Activated CD8-positive, alpha-beta T cell treated with anti-CD3 and anti-CD28 coated beads for 36 hours (primary cell): ENCODE measurements at regions of chr3 and their contacts with region 1.

Region 1: DNA sequence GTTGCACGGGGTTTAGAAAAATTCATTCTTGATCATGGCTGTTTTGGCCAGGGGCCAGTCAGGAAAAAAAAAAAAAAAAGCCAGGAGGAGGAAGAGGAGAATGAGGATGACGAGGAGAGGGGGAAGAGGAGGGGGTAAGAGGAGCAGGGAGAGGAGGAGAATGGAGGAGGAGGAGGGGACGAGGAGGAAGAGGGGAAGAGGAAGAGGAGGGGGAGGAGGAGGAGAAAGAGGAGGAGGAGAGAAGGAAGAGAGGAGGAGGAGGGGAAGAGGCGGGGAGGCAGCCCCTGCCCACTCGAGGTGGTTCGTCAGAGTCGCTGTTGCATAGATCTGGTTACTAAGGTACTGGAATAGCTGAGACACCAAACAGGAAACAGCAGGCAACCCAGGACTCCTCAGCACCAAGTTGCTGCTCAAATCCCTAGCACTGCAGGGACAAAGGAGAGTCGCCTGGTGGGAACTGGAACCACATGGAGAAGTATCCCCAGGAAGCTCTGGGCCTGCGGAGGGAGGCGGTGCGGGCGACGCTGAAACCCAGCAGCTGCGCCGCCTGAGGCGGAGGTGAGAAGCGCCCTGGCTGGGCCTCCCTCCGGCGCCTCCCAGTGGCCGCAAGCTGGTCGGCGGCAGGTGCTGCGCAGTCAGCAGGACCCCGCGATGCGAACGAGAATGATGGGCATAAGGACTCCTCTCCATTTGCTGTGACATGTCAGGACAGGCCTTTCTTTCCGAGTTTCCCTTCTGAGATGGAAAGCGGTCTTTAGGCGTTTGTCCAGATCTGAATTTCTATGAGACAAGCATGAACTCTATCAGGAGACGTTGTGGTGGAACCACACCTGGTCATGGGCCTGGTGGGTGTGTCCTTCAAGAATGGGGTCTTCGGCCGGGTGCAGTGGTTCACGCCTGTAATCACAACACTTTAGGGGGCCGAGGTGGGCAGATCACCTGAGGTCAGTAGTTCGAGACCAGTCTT is 17.5 kb downstream of the FAM240A start:
- DNase-seq: peak; percentile 85
- ATAC-seq: peak; percentile 100
- H3K4me3 Mint-ChIP-seq: peak overlapping the region; percentile 48
- H3K27ac Mint-ChIP-seq: no peak overlapping the region
- H3K4me1 Mint-ChIP-seq: peaks cover 13% of the 10 kb centered on the region
- H3K27me3 Mint-ChIP-seq: no peaks in the 10 kb centered on the region
- CTCF ChIP-seq: peak; percentile 99

Region 2: DNA sequence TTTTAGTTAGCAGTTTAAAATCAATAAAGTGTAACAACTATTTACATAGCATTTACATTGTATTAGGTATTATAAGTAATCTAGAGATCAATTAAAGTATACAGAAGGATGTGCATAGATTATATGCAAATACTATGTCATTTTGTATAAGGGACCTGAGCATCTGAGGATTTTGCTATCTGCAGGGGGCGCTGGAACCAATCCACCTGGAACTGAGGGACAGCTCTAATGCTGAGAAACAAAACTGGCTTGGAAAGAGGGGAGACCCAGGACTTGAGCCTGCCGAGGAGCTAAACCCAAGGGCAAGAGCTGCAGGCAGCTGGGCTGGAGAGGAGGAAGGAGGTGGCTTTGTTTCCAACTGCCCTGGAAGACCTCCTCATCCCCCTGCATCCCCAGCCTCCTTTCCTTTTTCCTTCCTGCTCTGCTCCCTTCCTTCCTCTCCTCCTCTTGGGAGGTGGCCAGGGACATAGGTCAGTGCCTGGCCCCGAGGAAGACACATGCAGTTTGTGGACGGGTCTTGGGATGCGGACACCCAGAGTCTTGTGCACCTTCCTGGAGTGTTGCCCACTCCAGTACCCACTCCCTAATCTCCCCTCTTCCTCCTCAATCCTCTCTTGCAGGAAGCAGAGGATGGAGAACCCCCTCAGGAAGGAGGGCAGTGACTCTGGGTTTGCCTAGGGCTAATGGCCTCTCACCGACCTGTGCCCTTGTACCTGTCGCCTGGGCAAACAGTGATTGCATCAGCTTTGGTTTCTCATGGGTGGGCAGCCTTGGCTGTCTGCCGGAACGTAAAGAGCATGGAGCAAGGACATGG is 132.9 kb before region 1 on chr3:
- CTCF ChIA-PET with region 1: interaction called, 254 read pairs
- POLR2A ChIA-PET with region 1: no interaction called
- intact Hi-C with region 1: no loop called
- DNase-seq: peak; percentile 76
- ATAC-seq: peak; percentile 37
- H3K4me3 Mint-ChIP-seq: no peak overlapping the region
- H3K27ac Mint-ChIP-seq: no peak overlapping the region
- H3K4me1 Mint-ChIP-seq: peaks cover 6% of the 10 kb centered on the region
- H3K27me3 Mint-ChIP-seq: no peaks in the 10 kb centered on the region
- CTCF ChIP-seq: peak; percentile 36

Region 3: DNA sequence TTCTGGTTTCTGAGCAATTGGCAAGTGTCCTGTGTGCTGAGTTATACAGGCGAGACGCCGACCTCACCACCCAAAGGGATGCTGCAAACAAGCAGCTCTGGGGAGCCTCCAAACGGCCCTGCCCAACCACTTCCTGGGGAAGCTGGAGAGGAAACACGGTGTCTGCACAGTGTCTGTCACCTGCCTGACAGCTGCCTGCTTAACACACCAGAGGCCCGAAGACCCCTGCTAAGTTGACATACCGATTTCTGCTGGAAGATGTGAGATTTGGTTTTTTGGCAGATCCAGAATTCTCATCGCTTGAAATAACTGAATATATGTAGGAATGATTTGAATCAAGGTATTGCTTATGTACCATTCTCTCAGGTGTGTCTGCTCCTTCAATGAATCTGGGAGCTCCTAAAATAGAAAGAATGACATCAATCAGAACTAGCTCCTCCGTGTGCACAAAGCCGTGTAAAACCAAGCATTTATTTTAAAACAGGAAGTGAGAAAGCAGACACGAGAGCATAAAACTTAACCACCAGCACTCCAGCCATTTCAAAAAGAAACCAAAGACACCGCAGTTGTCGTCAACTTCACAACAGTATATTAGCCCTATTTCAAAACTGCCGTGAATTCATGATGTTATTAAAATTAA is 90.9 kb before region 1 on chr3:
- CTCF ChIA-PET with region 1: interaction called, 10 read pairs
- POLR2A ChIA-PET with region 1: no interaction called
- intact Hi-C with region 1: no loop called
- DNase-seq: peak; percentile 89
- ATAC-seq: peak; percentile 93
- H3K4me3 Mint-ChIP-seq: peak overlapping the region; percentile 66
- H3K27ac Mint-ChIP-seq: peak overlapping the region; percentile 81
- H3K4me1 Mint-ChIP-seq: peaks cover 46% of the 10 kb centered on the region
- H3K27me3 Mint-ChIP-seq: peaks cover 2% of the 10 kb centered on the region
- CTCF ChIP-seq: no peak

Region 4: DNA sequence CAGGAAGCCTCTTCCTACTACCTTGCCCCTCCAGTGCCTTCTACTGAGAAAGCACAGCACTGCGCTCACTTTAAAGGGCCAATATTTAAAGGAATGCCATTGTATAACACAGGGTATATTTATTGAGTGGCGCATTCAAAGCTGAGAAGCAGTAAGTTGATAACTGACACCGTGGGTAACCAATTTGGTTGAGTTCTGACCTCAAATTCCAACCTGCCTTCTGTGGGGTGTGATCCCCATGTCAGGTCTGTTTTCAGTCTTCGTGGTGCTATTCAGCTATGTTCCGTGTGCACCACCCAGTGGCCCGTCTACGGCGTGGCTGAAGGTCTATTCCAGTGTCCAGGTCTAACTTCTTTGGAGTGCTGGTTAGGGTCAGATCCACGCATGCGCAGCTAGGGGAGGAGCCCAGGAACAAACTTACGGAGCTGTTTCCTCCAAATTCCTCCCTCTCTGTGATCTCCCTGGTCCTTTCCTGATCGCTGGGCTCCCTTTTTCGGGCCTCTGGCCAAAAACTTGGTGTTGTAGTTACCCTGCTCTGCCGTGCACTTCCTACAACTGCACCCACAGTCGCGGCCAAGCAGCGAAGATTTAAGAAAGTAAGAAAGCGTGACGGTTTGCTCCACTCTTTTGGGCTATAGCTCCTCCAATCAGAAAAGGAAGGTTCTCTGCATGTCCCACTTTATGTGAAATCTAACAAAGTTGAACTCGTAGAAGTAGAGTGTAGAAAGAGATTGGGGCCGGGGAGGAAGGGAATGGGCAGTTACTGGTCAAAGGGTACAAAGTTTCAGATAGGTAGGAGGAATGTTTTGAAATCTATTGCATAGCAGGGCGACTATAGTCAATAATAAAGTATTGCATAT is 71.4 kb before region 1 on chr3:
- CTCF ChIA-PET with region 1: interaction called, 38 read pairs
- POLR2A ChIA-PET with region 1: no interaction called
- intact Hi-C with region 1: no loop called
- DNase-seq: peak; percentile 79
- ATAC-seq: peak; percentile 94
- H3K4me3 Mint-ChIP-seq: peak overlapping the region; percentile 63
- H3K27ac Mint-ChIP-seq: no peak overlapping the region
- H3K4me1 Mint-ChIP-seq: peaks cover 13% of the 10 kb centered on the region
- H3K27me3 Mint-ChIP-seq: peaks cover 2% of the 10 kb centered on the region
- CTCF ChIP-seq: peak; percentile 69

Region 5: DNA sequence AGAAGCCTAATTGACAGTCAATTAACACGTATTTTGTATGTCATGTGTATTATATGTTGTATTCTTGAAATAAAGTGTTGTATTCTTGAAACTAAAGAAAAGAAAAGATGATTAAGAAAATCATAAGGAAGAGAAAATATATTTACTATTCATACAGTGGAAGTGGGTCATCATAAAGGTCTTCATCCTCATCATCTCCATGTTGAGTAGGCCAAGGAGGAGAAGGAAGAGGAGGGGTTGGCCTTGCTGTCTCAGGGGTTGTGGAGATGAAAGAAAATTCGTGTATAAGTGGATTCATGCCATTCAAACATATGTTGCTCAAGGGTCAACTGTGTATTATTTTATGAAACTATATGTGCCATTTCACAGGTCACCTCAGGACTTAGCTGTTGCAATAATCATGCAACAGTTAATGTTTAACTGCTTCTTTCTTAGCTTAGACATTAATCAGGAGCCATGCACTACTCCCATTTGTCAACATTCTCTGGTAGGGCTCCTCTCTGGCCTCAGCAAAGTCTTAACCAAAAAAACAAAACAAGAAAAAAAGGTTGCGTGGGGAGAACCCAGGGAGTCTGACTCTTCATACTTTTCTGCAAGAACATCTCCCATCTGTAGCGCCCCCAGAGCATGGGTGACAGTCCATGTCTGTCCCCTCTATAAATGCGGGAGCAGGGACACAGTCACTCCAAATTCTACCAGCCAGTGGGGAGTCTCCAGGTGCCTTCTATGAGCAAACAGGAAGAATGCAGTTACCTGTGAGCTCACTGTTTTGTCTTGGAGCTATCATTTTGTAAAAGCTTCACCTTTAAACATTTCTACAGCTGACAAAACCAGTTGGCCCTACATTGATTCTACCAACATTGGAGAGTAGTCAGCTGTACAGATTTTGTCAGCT is 43.8 kb before region 1 on chr3:
- CTCF ChIA-PET with region 1: interaction called, 11 read pairs
- POLR2A ChIA-PET with region 1: interaction called, 3 read pairs
- intact Hi-C with region 1: no loop called
- DNase-seq: no peak
- ATAC-seq: no peak
- H3K4me3 Mint-ChIP-seq: no peak overlapping the region
- H3K27ac Mint-ChIP-seq: no peak overlapping the region
- H3K4me1 Mint-ChIP-seq: peaks cover 2% of the 10 kb centered on the region
- H3K27me3 Mint-ChIP-seq: peaks cover 2% of the 10 kb centered on the region
- CTCF ChIP-seq: no peak

Region 6: GRCh38 chr3:46612324-46612723 is 17.5 kb before region 1 on chr3 and contains the start of gene FAM240A:
- CTCF ChIA-PET with region 1: interaction called, 20 read pairs
- POLR2A ChIA-PET with region 1: no interaction called
- intact Hi-C with region 1: no loop called
- DNase-seq: no peak
- ATAC-seq: no peak
- H3K4me3 Mint-ChIP-seq: no peak within 1 kb of the TSS
- H3K27ac Mint-ChIP-seq: no peak within 1 kb of the TSS
- H3K4me1 Mint-ChIP-seq: no peaks in the 10 kb centered on the region
- H3K27me3 Mint-ChIP-seq: peaks cover 15% of the 10 kb centered on the region
- CTCF ChIP-seq: no peak
- total RNA-seq, gene FAM240A: not detected

Region 7: GRCh38 chr3:46642971-46643370 is 13.1 kb after region 1 on chr3:
- CTCF ChIA-PET with region 1: interaction called, 21 read pairs
- POLR2A ChIA-PET with region 1: interaction called, 3 read pairs
- intact Hi-C with region 1: no loop called
- DNase-seq: no peak
- ATAC-seq: no peak
- H3K4me3 Mint-ChIP-seq: no peak overlapping the region
- H3K27ac Mint-ChIP-seq: no peak overlapping the region
- H3K4me1 Mint-ChIP-seq: no peaks in the 10 kb centered on the region
- H3K27me3 Mint-ChIP-seq: peaks cover 13% of the 10 kb centered on the region
- CTCF ChIP-seq: no peak